Activated T-helper 2 cell treated with anti-CD3 and anti-CD28 coated beads, Interferon-gamma antibody, Interleukin-2, Interleukin-4, amounts not matched to agents 10 μg/mL and 5 μg/mL and 100 μg/mL, durations not matched to agents 14 hours and 24 hours and 36 hours (primary cell): ENCODE measurements at regions of chr3 and their contacts with region 1.

Region 1: DNA sequence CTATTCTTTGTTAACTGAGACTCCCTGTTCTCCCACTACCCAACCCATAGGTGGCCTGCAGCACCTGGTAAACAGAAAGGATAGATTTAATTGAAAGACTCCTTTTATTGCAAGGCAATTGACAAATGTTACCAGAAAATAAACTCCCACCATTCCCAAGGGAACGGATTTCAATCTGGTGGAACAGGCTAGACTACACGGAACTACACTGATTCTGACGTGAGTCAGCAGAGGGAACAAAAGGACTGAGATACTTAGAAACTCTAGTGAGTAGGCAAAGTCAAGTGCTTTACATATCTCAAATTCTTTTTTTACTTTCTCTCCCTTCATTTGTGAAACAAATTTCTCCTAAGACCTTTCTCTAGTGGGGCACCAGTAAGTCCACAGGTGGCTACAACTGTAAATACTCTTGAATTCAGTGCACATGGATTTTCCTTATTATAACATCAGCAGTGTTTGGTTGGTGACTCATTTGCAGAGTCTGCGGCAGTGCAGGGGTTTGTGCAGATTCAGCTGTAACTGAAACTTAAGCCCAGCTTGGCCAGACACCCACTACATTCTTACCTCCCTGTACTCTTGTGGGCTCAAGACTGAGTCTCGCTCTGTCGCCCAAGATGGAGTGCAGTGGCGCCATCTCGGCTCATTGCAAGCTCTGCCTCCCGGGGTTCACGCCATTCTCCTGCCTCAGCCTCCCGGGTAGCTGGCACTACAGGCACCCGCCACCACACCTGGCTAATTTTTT is 34.3 kb upstream of the PLSCR2 start:
- DNase-seq: no peak
- H3K4me3 Mint-ChIP-seq: no peak overlapping the region
- H3K27ac Mint-ChIP-seq: no peak overlapping the region
- H3K4me1 Mint-ChIP-seq: peaks cover 35% of the 10 kb centered on the region
- H3K27me3 Mint-ChIP-seq: no peaks in the 10 kb centered on the region

Region 2: GRCh38 chr3:146342989-146343388 is 160.6 kb before region 1 on chr3:
- intact Hi-C with region 1: no loop called
- DNase-seq: no peak
- H3K4me3 Mint-ChIP-seq: no peak overlapping the region
- H3K27ac Mint-ChIP-seq: no peak overlapping the region
- H3K4me1 Mint-ChIP-seq: no peaks in the 10 kb centered on the region
- H3K27me3 Mint-ChIP-seq: no peaks in the 10 kb centered on the region

Region 3: GRCh38 chr3:146464005-146464595 is 39.5 kb before region 1 on chr3:
- intact Hi-C with region 1: loop called (anchors 2 kb)
- DNase-seq: no peak
- H3K4me3 Mint-ChIP-seq: no peak overlapping the region
- H3K27ac Mint-ChIP-seq: no peak overlapping the region
- H3K4me1 Mint-ChIP-seq: peaks cover 25% of the 10 kb centered on the region
- H3K27me3 Mint-ChIP-seq: no peaks in the 10 kb centered on the region

Region 4: GRCh38 chr3:146544002-146544928 is 40.6 kb after region 1 on chr3 and contains the start of gene PLSCR1:
- intact Hi-C with region 1: loop called (anchors 2 kb)
- DNase-seq: peak; percentile 75
- H3K4me3 Mint-ChIP-seq: peak within 1 kb of the TSS; percentile 87
- H3K27ac Mint-ChIP-seq: peak within 1 kb of the TSS; percentile 86
- H3K4me1 Mint-ChIP-seq: peaks cover 65% of the 10 kb centered on the region
- H3K27me3 Mint-ChIP-seq: no peaks in the 10 kb centered on the region
- total RNA-seq, gene PLSCR1: 54.0 and 65.1 TPM in 2 replicates